MCF 10A (cell line): ENCODE measurements at regions of chr1 and their contacts with region 1.

Region 1: DNA sequence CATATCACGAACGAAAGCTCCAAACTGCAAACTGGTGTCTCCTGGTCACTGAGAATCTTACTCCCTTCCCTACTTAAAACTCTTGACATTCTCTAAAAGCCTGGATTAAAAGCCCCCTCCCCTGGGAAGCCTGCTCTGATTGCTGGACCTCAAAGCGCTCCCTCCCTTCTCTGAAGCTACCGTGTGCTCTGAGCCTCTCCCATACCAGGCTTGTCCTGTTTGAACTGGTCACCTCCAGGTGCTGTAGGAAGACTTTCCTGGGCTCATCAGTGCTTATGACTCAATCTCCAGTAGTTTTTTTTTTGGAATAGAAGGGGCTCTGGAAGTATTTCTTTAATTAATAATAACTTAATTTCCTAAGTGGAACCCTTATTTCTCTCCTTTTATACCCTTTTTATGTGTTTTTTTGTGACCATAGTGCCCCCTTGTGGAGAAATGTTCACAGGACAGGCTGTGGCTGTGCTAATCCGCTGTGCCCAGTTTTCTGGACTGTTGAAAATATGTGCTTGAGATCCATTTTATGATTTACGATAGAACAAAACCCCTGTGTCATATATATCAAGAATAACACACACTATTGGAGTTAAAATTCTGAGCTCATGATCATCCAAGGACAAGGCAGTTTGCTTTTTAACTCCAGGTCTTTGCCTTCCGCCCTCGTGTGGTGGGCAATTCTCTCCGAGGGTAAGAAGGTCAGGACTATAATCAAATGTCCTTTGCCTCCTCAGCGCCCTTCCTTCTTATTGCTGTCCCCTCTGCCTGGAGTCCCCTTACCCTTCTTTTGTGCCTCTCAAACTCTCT is 16.9 kb downstream of the MTARC1 start:
- DNase-seq: peak; percentile 74
- H3K4me3 Mint-ChIP-seq: no peak overlapping the region
- H3K27ac Mint-ChIP-seq: no peak overlapping the region
- H3K4me1 Mint-ChIP-seq: no peaks in the 10 kb centered on the region
- H3K27me3 Mint-ChIP-seq: no peaks in the 10 kb centered on the region
- CTCF ChIP-seq: peak; percentile 97

Region 2: DNA sequence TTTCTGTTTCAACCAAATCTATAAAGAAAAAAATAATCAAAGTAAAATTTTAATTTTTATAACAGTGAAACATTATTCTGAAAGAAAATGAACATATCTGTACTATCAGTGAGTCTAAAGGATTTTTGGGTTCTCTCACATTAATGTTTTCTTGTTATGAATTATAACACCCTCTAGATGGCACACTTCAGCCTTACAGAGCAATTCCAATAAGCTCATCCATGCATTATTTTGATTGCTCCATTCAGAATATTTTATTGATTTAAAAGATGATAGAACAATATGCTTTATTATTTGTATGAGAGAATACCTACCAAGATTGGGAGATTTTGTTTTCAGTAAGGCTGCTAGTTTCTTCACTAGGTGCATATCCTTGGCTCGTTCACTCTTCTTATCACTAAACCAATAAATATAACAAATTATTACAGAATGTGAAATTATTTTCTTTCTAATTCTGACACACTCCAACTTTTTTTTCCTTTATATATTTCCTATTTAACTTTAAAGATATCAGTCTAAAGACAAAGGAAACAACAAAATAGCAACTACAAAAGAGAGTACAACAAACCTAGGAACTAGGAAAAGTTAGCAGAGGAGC is 613.8 kb before region 1 on chr1:
- CTCF ChIA-PET with region 1: interaction called, 27 read pairs
- POLR2A ChIA-PET with region 1: no interaction called
- intact Hi-C with region 1: no loop called
- DNase-seq: peak; percentile 64
- H3K4me3 Mint-ChIP-seq: no peak overlapping the region
- H3K27ac Mint-ChIP-seq: no peak overlapping the region
- H3K4me1 Mint-ChIP-seq: no peaks in the 10 kb centered on the region
- H3K27me3 Mint-ChIP-seq: no peaks in the 10 kb centered on the region
- CTCF ChIP-seq: peak; percentile 66

Region 3: GRCh38 chr1:220726634-220727033 is 77.0 kb before region 1 on chr1:
- CTCF ChIA-PET with region 1: interaction called, 11 read pairs
- POLR2A ChIA-PET with region 1: no interaction called
- intact Hi-C with region 1: no loop called
- DNase-seq: no peak
- H3K4me3 Mint-ChIP-seq: no peak overlapping the region
- H3K27ac Mint-ChIP-seq: no peak overlapping the region
- H3K4me1 Mint-ChIP-seq: peaks cover 2% of the 10 kb centered on the region
- H3K27me3 Mint-ChIP-seq: no peaks in the 10 kb centered on the region
- CTCF ChIP-seq: peak; percentile 49

Region 4: DNA sequence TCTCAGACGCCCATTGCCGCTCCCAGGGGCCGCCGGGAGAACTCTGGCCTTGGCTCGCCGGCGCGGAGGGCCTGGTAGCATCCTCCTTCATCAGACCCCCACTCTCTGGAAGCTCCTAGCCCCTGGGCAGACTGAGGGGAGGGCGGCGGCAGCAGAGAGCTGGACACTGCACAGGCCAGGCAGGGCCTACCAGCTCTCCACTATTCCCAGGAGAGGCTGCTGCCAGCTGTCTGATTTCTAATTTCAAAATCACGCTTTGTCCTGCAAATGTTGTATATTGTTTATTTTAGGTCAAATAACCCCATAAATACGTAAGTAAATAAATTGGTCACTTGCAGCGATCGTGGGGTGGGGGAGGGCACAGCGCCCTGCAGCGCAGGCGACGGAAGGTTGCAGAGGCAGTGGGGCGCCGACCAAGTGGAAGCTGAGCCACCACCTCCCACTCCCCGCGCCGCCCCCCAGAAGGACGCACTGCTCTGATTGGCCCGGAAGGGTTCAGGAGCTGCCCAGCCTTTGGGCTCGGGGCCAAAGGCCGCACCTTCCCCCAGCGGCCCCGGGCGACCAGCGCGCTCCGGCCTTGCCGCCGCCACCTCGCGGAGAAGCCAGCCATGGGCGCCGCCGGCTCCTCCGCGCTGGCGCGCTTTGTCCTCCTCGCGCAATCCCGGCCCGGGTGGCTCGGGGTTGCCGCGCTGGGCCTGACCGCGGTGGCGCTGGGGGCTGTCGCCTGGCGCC is 17.1 kb before region 1 on chr1 and contains the start of gene MTARC1:
- CTCF ChIA-PET with region 1: interaction called, 142 read pairs
- POLR2A ChIA-PET with region 1: interaction called, 4 read pairs
- intact Hi-C with region 1: no loop called
- DNase-seq: peak; percentile 76
- H3K4me3 Mint-ChIP-seq: peak within 1 kb of the TSS; percentile 61
- H3K27ac Mint-ChIP-seq: no peak within 1 kb of the TSS
- H3K4me1 Mint-ChIP-seq: peaks cover 17% of the 10 kb centered on the region
- H3K27me3 Mint-ChIP-seq: no peaks in the 10 kb centered on the region
- CTCF ChIP-seq: peak; percentile 22
- total RNA-seq, gene MTARC1: 0.96 and 1.5 TPM in 2 replicates